HCT116 (cell line): ENCODE measurements at regions of chr12 and their contacts with region 1.

Region 1: DNA sequence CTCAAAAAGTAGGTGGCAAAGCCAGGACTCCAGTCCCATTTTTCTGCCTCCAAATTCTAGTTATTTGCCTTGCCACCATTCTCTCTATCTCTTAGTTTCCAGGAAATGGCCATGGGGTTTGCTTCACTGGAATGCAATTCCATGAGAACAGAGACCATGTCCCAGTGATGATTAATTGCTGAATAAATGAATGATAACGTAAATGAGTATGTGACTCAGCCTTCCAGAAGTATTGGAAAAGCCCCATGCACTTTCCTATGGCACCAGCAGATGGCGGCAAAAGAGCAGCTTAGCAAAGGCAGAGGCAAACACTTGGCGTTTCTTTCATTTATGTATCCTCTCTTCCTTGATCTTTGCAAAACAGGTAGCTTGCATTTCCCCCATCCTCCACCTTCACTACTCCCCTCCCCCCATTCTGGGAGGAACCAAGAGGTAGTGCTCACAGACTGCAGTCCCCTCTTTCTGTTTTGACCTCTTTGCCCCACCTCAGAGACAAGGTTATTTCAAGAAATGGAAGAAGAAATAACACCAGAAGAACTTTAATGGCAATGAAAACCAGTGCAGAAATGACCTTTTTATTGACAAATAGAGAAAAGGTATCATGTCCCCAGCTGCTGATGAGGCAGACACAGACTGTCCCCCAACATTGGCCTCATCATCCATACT is 21.3 kb downstream of the TBX3 start:
- DNase-seq: peak; percentile 57
- ATAC-seq: peak; percentile 77
- H3K4me3 ChIP-seq: no peak overlapping the region
- H3K27ac ChIP-seq: no peak overlapping the region
- H3K4me1 ChIP-seq: peaks cover under 1 to 11% of the 10 kb centered on the region in 2 experiments; a peak in 3 of 4 replicates
- H3K27me3 ChIP-seq: no peaks in the 10 kb centered on the region
- CTCF ChIP-seq: peak; percentile 80 to 95 (median 81)
- POLR2A ChIP-seq: no peak
- RAD21 ChIP-seq: peak; percentile 95

Region 2: GRCh38 chr12:114625294-114625851 is 37.3 kb before region 1 on chr12:
- CTCF ChIA-PET with region 1: interaction called, 6 read pairs
- POLR2A ChIA-PET with region 1: no interaction called
- RAD21 ChIA-PET with region 1: no interaction called
- intact Hi-C with region 1: loop called (anchors 1 kb)
- DNase-seq: peak; percentile 52
- ATAC-seq: peak; percentile 89
- H3K4me3 ChIP-seq: no peak overlapping the region
- H3K27ac ChIP-seq: no peak overlapping the region
- H3K4me1 ChIP-seq: peaks cover 12 to 18% of the 10 kb centered on the region in 2 experiments; a peak in 3 of 4 replicates
- H3K27me3 ChIP-seq: no peaks in the 10 kb centered on the region
- CTCF ChIP-seq: peak; percentile 73 to 89 (median 87)
- POLR2A ChIP-seq: no peak
- RAD21 ChIP-seq: peak; percentile 85

Region 3: GRCh38 chr12:115166698-115167315 is 504.2 kb after region 1 on chr12:
- CTCF ChIA-PET with region 1: no interaction called
- POLR2A ChIA-PET with region 1: no interaction called
- RAD21 ChIA-PET with region 1: no interaction called
- intact Hi-C with region 1: loop called (anchors 10 kb)
- DNase-seq: no peak
- ATAC-seq: no peak
- H3K4me3 ChIP-seq: no peak overlapping the region
- H3K27ac ChIP-seq: no peak overlapping the region
- H3K4me1 ChIP-seq: no peaks in the 10 kb centered on the region
- H3K27me3 ChIP-seq: no peaks in the 10 kb centered on the region
- CTCF ChIP-seq: 0 out of 6 replicates have a peak, but pooled peaks of 1 of the 3 experiments have one; percentile 12
- POLR2A ChIP-seq: no peak
- RAD21 ChIP-seq: peak; percentile 27

Region 4: GRCh38 chr12:115771065-115771464 is 1108.4 kb after region 1 on chr12:
- CTCF ChIA-PET with region 1: interaction called, 4 read pairs
- POLR2A ChIA-PET with region 1: no interaction called
- RAD21 ChIA-PET with region 1: no interaction called
- intact Hi-C with region 1: loop called (anchors 5 kb)
- DNase-seq: peak; percentile 13
- ATAC-seq: peak; percentile 61
- H3K4me3 ChIP-seq: no peak overlapping the region
- H3K27ac ChIP-seq: no peak overlapping the region
- H3K4me1 ChIP-seq: peaks cover 8 to 29% of the 10 kb centered on the region in 2 experiments
- H3K27me3 ChIP-seq: no peaks in the 10 kb centered on the region
- CTCF ChIP-seq: peak; percentile 23 to 27 (median 27); a peak in 4 of 6 replicates
- POLR2A ChIP-seq: no peak
- RAD21 ChIP-seq: peak; percentile 61